ENCODE measurements at regions of chr17 and their contacts with region 1.

Region 1: GRCh38 chr17:58136669-58137283 is 11.4 kb upstream of the OR4D1 start:
- DNase-seq: no peak
- H3K4me3 ChIP-seq: no peak overlapping the region
- H3K27ac ChIP-seq: no peak overlapping the region
- H3K4me1 ChIP-seq: no peaks in the 10 kb centered on the region
- H3K27me3 ChIP-seq: peaks cover 44% of the 10 kb centered on the region
- CTCF ChIP-seq: peak in 1 of 5 experiments; percentile 20
- EP300 ChIP-seq: no peak
- POLR2A ChIP-seq: no peak

Region 2: DNA sequence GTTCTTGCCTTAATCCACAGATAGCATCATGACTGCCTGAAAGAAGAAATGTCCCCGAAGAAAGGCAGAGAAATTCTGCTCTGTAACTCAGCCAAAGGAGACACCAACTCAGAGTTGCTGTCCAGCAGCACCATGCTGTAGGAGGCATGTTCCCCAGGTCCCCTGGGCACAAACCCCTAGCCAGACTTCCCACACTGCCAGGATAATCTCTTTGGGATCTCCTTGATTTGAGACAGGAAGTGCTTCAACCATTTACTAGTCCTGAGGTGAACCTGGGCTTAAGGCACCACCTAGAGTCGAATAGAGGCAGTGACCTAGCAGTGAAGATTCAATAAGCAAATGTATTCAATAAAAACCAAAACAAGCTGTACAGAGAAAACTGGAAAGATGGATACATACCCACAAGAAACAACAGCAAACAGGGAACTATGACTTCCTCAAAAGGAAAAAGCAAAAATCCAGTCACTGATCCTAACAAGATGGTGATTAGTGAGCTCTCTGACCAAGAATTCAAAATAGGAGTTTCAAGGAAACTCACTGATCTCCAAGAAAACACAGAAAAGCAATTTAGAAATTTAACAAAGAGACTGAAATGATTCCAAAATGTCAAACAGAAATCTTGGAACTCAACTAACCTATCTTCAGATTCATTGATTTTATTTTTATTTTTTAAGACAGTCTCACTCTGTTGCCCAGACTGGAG is 35.7 kb after region 1 on chr17:
- in situ Hi-C with region 1: no loop called
- intact Hi-C with region 1: no loop called
- DNase-seq: no peak
- H3K4me3 ChIP-seq: no peak overlapping the region
- H3K27ac ChIP-seq: no peak overlapping the region
- H3K4me1 ChIP-seq: no peaks in the 10 kb centered on the region
- H3K27me3 ChIP-seq: peaks cover 13% of the 10 kb centered on the region
- CTCF ChIP-seq: peak in 3 of 5 experiments; percentile 21 to 27 (median 25)
- EP300 ChIP-seq: no peak
- POLR2A ChIP-seq: no peak

Region 3: GRCh38 chr17:58200017-58200633 is 63.3 kb after region 1 on chr17:
- in situ Hi-C with region 1: no loop called
- intact Hi-C with region 1: no loop called
- DNase-seq: peak; percentile 40
- H3K4me3 ChIP-seq: no peak overlapping the region
- H3K27ac ChIP-seq: no peak overlapping the region
- H3K4me1 ChIP-seq: no peaks in the 10 kb centered on the region
- H3K27me3 ChIP-seq: peaks cover 24% of the 10 kb centered on the region
- CTCF ChIP-seq: peak; percentile 19 to 37 (median 29)
- EP300 ChIP-seq: no peak
- POLR2A ChIP-seq: no peak

Region 4: GRCh38 chr17:58249270-58250133 is 112.7 kb after region 1 on chr17:
- in situ Hi-C with region 1: loop called in 1 of 4 experiments (anchors 25 kb)
- intact Hi-C with region 1: no loop called
- DNase-seq: peak; percentile 65
- H3K4me3 ChIP-seq: peak overlapping the region; percentile 22 to 47 (median 34)
- H3K27ac ChIP-seq: no peak overlapping the region
- H3K4me1 ChIP-seq: peaks cover 9 to 11% (median 10%) of the 10 kb centered on the region in 4 donors
- H3K27me3 ChIP-seq: peaks cover 32% of the 10 kb centered on the region
- CTCF ChIP-seq: peak; percentile 75 to 96 (median 94)
- EP300 ChIP-seq: no peak
- POLR2A ChIP-seq: no peak

Region 5: GRCh38 chr17:58980706-58981481 is 844.1 kb after region 1 on chr17:
- in situ Hi-C with region 1: no loop called
- intact Hi-C with region 1: loop called (anchors 5 kb)
- DNase-seq: no peak
- H3K4me3 ChIP-seq: no peak overlapping the region
- H3K27ac ChIP-seq: no peak overlapping the region
- H3K4me1 ChIP-seq: no peaks in the 10 kb centered on the region
- H3K27me3 ChIP-seq: no peaks in the 10 kb centered on the region
- CTCF ChIP-seq: no peak
- EP300 ChIP-seq: no peak
- POLR2A ChIP-seq: no peak

Measured in transverse colon (tissue), 4 donors.